HAP-1 (cell line): ENCODE measurements at regions of chr11 and their contacts with region 1.

Region 1: GRCh38 chr11:2151500-2152257 is 9.3 kb downstream of the INS start:
- DNase-seq: peak; percentile 61 to 86
- H3K4me3 ChIP-seq: no peak overlapping the region
- H3K4me1 ChIP-seq: no peaks in the 10 kb centered on the region
- H3K27me3 ChIP-seq: peaks cover 39% of the 10 kb centered on the region

Region 2: DNA sequence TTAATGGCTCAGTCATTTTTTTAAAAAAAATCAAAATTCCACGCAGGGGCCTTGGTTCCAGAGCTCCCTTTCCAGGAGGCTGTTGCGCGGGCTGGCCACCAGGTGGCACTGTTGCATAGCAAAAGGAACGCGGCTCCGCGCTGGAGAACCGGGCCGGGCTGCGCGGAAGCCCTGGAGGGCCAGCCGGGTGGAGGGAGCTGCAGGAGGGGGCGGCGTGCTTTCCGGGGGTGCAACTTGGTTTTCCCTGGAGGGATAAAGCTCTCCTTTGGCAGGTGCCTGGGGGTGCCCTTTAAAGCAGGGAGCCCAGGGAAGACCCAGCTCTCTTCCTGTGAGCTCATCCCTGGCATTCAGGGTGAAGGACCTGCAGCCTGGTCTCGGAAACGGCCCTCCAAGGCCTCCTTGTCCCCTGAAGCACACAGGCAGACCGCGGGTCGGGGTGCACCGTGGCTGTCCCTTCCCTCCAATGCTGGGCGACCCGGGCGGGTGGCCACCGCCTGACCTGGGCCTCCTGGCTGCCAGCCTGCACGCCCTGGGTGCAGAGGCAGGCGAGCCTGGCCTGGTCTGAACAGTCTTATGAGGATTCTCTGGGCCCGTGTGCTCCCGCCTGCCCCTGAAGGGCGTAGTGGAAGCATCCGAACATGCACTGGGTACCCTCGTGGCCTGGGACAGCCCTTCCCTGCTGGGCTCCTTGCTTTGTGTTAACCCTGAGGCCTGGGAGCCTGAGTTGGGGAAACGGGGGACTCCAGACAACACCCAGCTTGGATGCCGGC is 498.7 kb before region 1 on chr11:
- in situ Hi-C with region 1: loop called (anchors 10 kb)
- DNase-seq: peak; percentile 36 to 85
- H3K4me3 ChIP-seq: no peak overlapping the region
- H3K4me1 ChIP-seq: no peaks in the 10 kb centered on the region
- H3K27me3 ChIP-seq: peaks cover 4% of the 10 kb centered on the region

Region 3: GRCh38 chr11:1863352-1864216 is 288.1 kb before region 1 on chr11:
- in situ Hi-C with region 1: loop called (anchors 25 kb)
- DNase-seq: peak; percentile 7 to 73
- H3K4me3 ChIP-seq: no peak overlapping the region
- H3K4me1 ChIP-seq: no peaks in the 10 kb centered on the region
- H3K27me3 ChIP-seq: peaks cover under 1% of the 10 kb centered on the region; the same call in 1 of the 2 replicates

Region 4: DNA sequence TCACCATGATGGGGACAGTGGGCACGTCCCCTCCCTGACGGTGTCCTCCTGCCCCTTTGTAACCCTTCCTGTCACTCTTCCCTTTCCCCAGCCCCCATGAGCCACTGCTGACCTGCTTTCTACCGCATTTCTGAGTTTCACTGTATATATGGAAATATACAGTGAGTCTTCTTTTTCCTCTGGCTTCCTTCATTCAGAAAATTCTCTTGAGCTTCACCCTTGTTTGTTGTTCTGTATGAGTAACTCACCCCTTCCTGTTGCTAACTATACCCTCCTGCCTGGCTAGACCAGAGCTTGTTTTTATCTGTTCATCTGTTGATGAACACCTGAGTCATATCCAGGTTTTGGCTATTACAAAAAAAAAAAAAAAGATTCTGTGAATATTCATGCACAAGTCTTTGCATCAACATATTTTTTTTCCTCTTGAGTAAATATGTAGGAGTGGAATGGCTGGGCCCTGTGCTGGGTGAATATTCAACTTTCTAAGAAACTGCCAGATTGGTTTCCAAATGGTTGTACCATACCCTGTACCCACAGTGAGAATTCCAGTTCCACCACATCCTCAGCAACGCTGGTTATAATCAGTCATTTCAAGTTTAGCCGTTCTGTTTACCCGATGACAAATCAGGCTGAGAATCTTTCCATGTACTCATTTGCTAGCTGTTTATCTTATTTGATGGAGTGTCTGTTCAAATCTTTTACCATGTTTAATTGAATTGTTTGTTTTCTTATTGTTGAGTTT is 74.4 kb before region 1 on chr11:
- in situ Hi-C with region 1: no loop called
- DNase-seq: no peak
- H3K4me3 ChIP-seq: no peak overlapping the region
- H3K4me1 ChIP-seq: no peaks in the 10 kb centered on the region
- H3K27me3 ChIP-seq: no peaks in the 10 kb centered on the region

Region 5: GRCh38 chr11:2256293-2256913 is 104.7 kb after region 1 on chr11:
- in situ Hi-C with region 1: no loop called
- DNase-seq: no peak
- H3K4me3 ChIP-seq: no peak overlapping the region
- H3K4me1 ChIP-seq: no peaks in the 10 kb centered on the region
- H3K27me3 ChIP-seq: peaks cover 5% of the 10 kb centered on the region; the same call in 1 of the 2 replicates